ENCODE measurements at regions of chr17 and their contacts with region 1.

Region 1: DNA sequence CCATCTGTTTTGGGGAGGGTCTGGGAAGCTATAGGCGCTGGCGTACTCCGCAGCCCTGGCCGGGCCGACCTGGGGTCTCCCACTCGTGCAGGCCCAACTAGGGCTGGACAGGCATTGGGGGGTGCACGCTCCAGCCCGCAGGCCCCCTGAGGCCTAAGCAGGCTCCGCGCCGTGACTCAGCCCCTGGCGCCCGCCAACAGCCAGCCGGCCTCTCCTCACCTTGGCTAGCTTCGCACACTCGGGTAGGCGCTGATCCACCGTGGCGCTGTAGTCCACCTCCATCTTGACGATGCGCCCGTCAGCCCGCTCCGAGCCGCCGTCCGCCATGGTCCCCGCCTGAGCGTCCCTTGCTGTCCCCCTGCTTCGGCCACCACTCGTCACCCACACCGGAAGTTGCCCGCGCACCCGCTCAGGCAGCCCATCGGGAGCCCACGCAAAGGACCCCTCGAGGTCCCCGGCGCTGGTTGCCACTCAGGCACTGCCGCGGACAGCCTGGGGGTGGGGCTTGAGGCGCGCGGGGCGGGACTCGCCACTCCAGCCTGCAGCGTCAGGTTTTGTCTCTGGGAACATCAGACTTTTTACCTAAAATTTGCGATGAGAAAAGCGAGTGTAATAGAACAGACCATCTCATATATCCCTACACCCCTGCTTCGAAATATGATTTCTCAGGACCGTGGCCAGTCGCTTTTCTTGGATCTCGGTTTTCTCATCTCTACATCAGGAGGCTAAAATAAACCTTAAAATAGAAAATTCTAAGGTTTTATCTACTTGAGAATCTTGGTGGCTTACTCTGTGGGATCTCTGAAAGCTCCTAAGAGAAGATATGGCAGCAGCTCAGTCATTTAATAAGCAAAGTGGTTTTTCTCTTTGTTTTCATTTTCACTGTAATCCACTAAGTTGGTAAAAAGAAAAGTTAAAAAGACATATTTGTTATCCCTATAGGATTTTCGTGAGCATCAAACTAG is at the start of gene PSMD12:
- DNase-seq: peak; percentile 94 to 98 (median 95)
- ATAC-seq: peak; percentile 95 to 98 (median 98)
- H3K4me3 ChIP-seq: peak within 1 kb of the TSS; percentile 72 to 98 (median 86)
- H3K27ac ChIP-seq: peak within 1 kb of the TSS; percentile 83 to 96 (median 92)
- H3K4me1 ChIP-seq: peaks cover 6 to 45% (median 39%) of the 10 kb centered on the region in 12 donors
- H3K27me3 ChIP-seq: no peaks in the 10 kb centered on the region
- CTCF ChIP-seq: peak in 2 of 12 donors; percentile 3 to 17
- POLR2A ChIP-seq: peak in 1 of 2 donors; percentile 75
- total RNA-seq, gene PSMD12: 18.2 to 57.2 (median 46.5) TPM

Region 2: DNA sequence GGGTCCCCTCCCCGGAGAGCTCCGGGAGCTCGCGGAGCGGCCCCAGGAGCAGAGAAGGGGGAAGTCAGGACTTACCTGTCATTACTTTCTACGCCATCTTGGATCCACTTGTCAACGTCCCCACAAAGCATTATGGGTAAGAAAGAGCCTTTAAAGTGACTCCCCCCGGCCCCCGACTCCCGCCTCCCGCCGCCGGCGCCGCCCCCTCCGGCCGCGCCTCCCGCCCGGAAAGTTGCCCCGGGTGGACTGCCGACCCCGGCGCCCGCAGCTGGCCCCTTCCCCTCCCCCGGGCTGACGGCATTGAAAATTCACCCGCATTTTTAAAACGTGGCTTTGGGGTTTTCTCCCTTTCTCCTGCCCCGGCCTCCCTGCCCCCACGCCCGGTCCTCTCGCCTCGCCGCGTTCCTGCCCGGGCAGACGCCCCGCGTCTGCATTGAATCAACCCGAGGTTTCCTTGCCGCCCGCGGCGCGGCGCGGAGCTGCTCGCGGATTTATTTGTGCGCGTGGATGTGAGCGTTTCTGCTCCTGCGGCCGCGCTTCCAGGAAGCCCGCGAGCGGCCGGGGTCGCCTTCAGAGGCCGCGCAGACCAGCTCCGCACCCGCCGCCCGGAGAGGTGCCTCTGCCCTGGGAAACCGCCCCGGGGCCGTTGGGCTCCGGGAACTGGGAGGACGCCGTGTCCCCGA is 121.3 kb before region 1 on chr17 and contains the start of gene HELZ:
- intact Hi-C with region 1: loop called in 1 of 10 experiments (anchors 10 kb)
- DNase-seq: peak; percentile 78 to 88 (median 79)
- ATAC-seq: peak; percentile 54 to 95 (median 88)
- H3K4me3 ChIP-seq: peak within 1 kb of the TSS; percentile 68 to 100 (median 96)
- H3K27ac ChIP-seq: peak within 1 kb of the TSS; percentile 59 to 94 (median 88)
- H3K4me1 ChIP-seq: peaks cover 12 to 55% (median 35%) of the 10 kb centered on the region in 12 donors
- H3K27me3 ChIP-seq: no peaks in the 10 kb centered on the region
- CTCF ChIP-seq: no peak
- POLR2A ChIP-seq: peak in 1 of 2 donors; percentile 19
- total RNA-seq, gene HELZ: 26.3 to 48.4 (median 32.5) TPM

Region 3: GRCh38 chr17:67293251-67294203 is 72.9 kb before region 1 on chr17:
- intact Hi-C with region 1: no loop called
- DNase-seq: peak; percentile 58 to 84 (median 63)
- ATAC-seq: peak; percentile 45 to 79 (median 74)
- H3K4me3 ChIP-seq: peak overlapping the region in 3 of 12 donors; percentile 2 to 38 (median 20)
- H3K27ac ChIP-seq: peak overlapping the region in 1 of 12 donors; percentile 24
- H3K4me1 ChIP-seq: peaks cover 0 to 28% (median 19%) of the 10 kb centered on the region in 12 donors
- H3K27me3 ChIP-seq: no peaks in the 10 kb centered on the region
- CTCF ChIP-seq: peak; percentile 65 to 89 (median 82)
- POLR2A ChIP-seq: no peak

Region 4: GRCh38 chr17:67312265-67312664 is 54.2 kb before region 1 on chr17:
- intact Hi-C with region 1: no loop called
- DNase-seq: peak in 1 of 5 donors; percentile 14
- ATAC-seq: peak; percentile 37 to 93 (median 52)
- H3K4me3 ChIP-seq: peak overlapping the region in 1 of 12 donors; percentile 11
- H3K27ac ChIP-seq: peak overlapping the region in 5 of 12 donors; percentile 9 to 71 (median 63)
- H3K4me1 ChIP-seq: peaks cover 0 to 18% (median 5%) of the 10 kb centered on the region in 12 donors
- H3K27me3 ChIP-seq: no peaks in the 10 kb centered on the region
- CTCF ChIP-seq: no peak
- POLR2A ChIP-seq: no peak

Region 5: GRCh38 chr17:67491009-67491680 is 124.7 kb after region 1 on chr17:
- intact Hi-C with region 1: no loop called
- DNase-seq: peak; percentile 86 to 95 (median 93)
- ATAC-seq: peak; percentile 96 to 99 (median 98)
- H3K4me3 ChIP-seq: peak overlapping the region in 9 of 12 donors; percentile 30 to 49 (median 38)
- H3K27ac ChIP-seq: peak overlapping the region in 11 of 12 donors; percentile 22 to 84 (median 72)
- H3K4me1 ChIP-seq: peaks cover 0 to 55% (median 38%) of the 10 kb centered on the region in 12 donors
- H3K27me3 ChIP-seq: no peaks in the 10 kb centered on the region
- CTCF ChIP-seq: no peak
- POLR2A ChIP-seq: peak in 1 of 2 donors; percentile 32

Measured in heart left ventricle (tissue), 16 donors.